HCT116 (cell line): ENCODE measurements at regions of chr1 and their contacts with region 1.

Region 1: DNA sequence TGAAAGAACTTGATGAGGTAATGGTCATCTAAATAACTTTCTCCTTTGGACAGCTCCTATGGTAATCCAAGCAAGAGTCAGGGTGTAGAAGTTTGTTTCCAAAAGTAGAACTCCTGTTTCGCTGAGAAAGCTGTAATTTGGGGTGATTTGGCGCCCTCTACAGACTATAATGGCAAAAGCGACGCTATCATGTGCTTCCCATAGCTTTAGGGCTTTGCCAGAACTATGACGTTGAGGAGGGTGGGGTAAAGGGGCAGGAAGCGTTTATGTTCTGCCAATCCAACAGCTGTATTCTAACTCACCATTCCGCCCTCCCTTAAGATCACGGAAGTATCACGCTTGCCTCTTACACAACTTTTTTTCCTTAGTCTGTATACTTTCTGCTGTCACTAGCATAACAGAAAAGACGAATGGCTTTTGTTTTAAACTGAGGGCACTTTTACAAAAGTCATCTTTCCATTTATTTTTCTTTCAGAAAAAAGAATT is at the start of gene FMO4:
- DNase-seq: peak; percentile 97
- ATAC-seq: peak; percentile 100
- H3K4me3 ChIP-seq: peak within 1 kb of the TSS; percentile 31 to 55
- H3K27ac ChIP-seq: no peak within 1 kb of the TSS; the same call in 1 of the 2 replicates
- H3K4me1 ChIP-seq: peaks cover 7 to 12% of the 10 kb centered on the region in 2 experiments; a peak in 3 of 4 replicates
- H3K27me3 ChIP-seq: no peaks in the 10 kb centered on the region
- CTCF ChIP-seq: peak; percentile 81 to 98 (median 89)
- POLR2A ChIP-seq: no peak
- RAD21 ChIP-seq: peak; percentile 85
- total RNA-seq, gene FMO4: 1.4 TPM

Region 2: GRCh38 chr1:170967042-170967910 is 346.6 kb before region 1 on chr1:
- CTCF ChIA-PET with region 1: interaction called, 97 read pairs
- POLR2A ChIA-PET with region 1: interaction called, 3 read pairs
- RAD21 ChIA-PET with region 1: interaction called, 10 to 11 read pairs
- intact Hi-C with region 1: loop called (anchors 1 kb)
- DNase-seq: peak; percentile 32
- ATAC-seq: peak; percentile 90
- H3K4me3 ChIP-seq: no peak overlapping the region
- H3K27ac ChIP-seq: no peak overlapping the region
- H3K4me1 ChIP-seq: no peaks in the 10 kb centered on the region
- H3K27me3 ChIP-seq: no peaks in the 10 kb centered on the region
- CTCF ChIP-seq: peak; percentile 55 to 66 (median 63); a peak in 5 of 6 replicates
- POLR2A ChIP-seq: no peak
- RAD21 ChIP-seq: peak; percentile 62

Region 3: DNA sequence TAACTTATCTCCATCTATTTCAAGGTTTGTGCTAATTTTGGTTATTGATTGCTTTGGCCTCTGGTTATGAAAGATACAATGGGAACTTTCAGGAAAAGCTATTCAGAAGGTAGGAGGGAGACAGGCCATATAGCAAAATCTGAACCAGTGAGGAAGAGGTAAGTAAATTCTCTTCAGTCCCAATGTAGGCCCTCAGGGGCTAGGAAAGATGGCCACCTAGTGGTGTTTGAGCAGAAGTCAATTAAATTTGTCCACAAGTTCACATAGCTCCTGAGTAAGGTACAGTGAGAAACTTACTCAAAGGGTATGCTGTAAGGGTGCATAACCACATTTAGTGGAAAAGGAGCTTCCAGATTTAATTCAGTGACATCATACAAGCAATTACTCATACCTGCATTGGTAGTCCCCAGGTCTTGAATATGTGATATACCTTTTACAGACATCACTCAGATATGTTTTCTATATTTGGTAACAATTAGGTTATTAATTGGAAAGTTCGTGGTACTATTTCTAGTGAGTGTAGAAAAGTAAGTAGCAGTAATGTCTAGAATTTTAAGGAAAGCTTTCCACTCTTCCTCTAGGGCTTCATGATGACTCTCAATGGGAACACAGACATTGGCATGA is 87.0 kb before region 1 on chr1:
- CTCF ChIA-PET with region 1: interaction called, 16 read pairs
- POLR2A ChIA-PET with region 1: interaction called, 3 read pairs
- RAD21 ChIA-PET with region 1: no interaction called
- intact Hi-C with region 1: no loop called
- DNase-seq: peak; percentile 42
- ATAC-seq: peak; percentile 96
- H3K4me3 ChIP-seq: no peak overlapping the region
- H3K27ac ChIP-seq: no peak overlapping the region
- H3K4me1 ChIP-seq: no peaks in the 10 kb centered on the region
- H3K27me3 ChIP-seq: no peaks in the 10 kb centered on the region
- CTCF ChIP-seq: peak; percentile 71 to 78 (median 75)
- POLR2A ChIP-seq: no peak
- RAD21 ChIP-seq: peak; percentile 88

Region 4: GRCh38 chr1:171251042-171251951 is 62.6 kb before region 1 on chr1:
- CTCF ChIA-PET with region 1: interaction called, 20 read pairs
- POLR2A ChIA-PET with region 1: no interaction called
- RAD21 ChIA-PET with region 1: interaction called, 4 to 13 read pairs
- intact Hi-C with region 1: loop called (anchors 5 kb)
- DNase-seq: peak; percentile 23
- ATAC-seq: peak; percentile 88
- H3K4me3 ChIP-seq: peak overlapping the region; percentile 58 to 65
- H3K27ac ChIP-seq: no peak overlapping the region
- H3K4me1 ChIP-seq: peaks cover 0 to 3% of the 10 kb centered on the region in 2 experiments; a peak in 1 of 4 replicates
- H3K27me3 ChIP-seq: no peaks in the 10 kb centered on the region
- CTCF ChIP-seq: peak; percentile 13 to 67 (median 64); a peak in 4 of 6 replicates
- POLR2A ChIP-seq: no peak
- RAD21 ChIP-seq: no peak

Region 5: GRCh38 chr1:171403371-171403770 is 89.5 kb after region 1 on chr1:
- CTCF ChIA-PET with region 1: interaction called, 3 read pairs
- POLR2A ChIA-PET with region 1: no interaction called
- RAD21 ChIA-PET with region 1: interaction called in 1 of 2 experiments, 3 read pairs
- intact Hi-C with region 1: loop called (anchors 5 kb)
- DNase-seq: no peak
- ATAC-seq: no peak
- H3K4me3 ChIP-seq: no peak overlapping the region
- H3K27ac ChIP-seq: no peak overlapping the region
- H3K4me1 ChIP-seq: peaks cover 0 to 7% of the 10 kb centered on the region in 2 experiments; a peak in 1 of 4 replicates
- H3K27me3 ChIP-seq: no peaks in the 10 kb centered on the region
- CTCF ChIP-seq: no peak
- POLR2A ChIP-seq: no peak
- RAD21 ChIP-seq: no peak